Activated CD4-positive, alpha-beta T cell treated with anti-CD3 and anti-CD28 coated beads for 36 hours (primary cell): ENCODE measurements at regions of chr14 and their contacts with region 1.

Region 1: DNA sequence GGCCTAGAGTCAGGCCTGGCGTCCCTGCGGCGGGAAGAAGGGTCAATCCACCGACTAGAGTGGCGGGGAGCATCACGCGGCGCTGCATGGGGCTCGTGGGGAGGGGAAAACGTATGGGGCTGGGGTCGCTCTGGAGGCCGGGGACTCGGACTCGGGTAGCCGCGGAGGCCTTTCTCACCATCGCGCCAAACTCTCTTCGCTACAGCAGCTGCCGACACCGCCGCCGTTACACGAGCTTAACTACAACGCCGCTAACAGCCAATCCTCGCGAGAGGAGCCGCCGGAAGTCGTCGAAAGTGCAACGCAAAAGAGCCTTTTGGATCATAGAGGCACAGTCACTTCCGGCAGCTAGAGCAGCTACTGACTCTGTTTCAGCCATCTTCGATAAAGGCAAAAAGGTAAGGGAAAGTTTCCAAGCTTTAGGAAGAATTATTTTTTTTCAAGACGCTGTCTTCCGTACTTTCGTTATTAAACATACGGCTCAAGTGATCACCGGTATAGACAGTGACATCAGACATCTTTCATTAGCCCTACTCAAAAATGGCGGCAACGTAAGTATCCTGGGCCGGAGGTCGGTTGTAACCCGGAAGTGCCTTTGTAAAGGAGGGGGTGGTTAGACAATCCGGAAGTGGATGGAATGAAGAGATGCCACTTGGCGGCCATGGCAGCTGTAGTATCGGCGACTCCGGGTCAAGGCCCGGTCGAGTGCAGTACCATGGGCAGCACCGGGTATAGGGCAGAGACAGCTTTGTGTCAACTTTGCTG is at the starts of genes ERH and SLC39A9:
- DNase-seq: peak; percentile 97
- ATAC-seq: peak; percentile 89
- H3K4me3 Mint-ChIP-seq: peak within 1 kb of the TSS; percentile 95
- H3K27ac Mint-ChIP-seq: peak within 1 kb of the TSS; percentile 100
- H3K4me1 Mint-ChIP-seq: peaks cover 63% of the 10 kb centered on the region
- H3K27me3 Mint-ChIP-seq: no peaks in the 10 kb centered on the region
- total RNA-seq, gene ERH: 343 to 385 TPM
- total RNA-seq, gene SLC39A9: 40.1 to 42.6 TPM

Region 2: DNA sequence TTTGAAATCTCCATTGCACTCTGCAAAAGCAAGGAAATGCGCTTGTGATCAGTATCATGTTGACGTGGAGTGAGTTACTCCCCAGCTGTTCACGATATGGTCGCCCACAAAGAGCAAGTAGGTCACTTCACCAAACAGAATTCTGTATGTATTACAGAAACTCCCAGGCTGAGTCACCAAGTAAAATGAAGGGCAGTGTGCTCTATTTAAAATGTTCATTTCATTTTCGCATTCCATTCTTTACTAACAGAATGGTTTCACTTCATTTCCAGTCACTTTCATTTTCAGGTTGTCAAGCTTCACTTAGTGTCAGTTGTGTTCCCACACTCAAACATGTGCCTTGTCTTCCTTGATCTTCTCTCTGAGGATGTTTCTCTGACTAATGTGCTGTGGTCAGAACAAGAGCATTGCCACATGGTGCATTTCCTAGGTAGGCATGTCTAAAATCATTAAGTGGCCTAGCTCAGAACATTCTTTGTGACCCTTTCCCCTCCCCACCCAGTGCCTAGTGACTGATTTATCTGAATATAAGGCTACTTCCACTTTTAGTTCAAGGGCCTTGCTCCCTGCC is 1187.4 kb before region 1 on chr14:
- CTCF ChIA-PET with region 1: no interaction called
- POLR2A ChIA-PET with region 1: no interaction called
- intact Hi-C with region 1: loop called in 1 of 2 experiments (anchors 2 kb)
- DNase-seq: peak; percentile 71
- ATAC-seq: peak; percentile 93
- H3K4me3 Mint-ChIP-seq: peak overlapping the region; percentile 43
- H3K27ac Mint-ChIP-seq: peak overlapping the region; percentile 84
- H3K4me1 Mint-ChIP-seq: peaks cover 53% of the 10 kb centered on the region
- H3K27me3 Mint-ChIP-seq: no peaks in the 10 kb centered on the region

Region 3: DNA sequence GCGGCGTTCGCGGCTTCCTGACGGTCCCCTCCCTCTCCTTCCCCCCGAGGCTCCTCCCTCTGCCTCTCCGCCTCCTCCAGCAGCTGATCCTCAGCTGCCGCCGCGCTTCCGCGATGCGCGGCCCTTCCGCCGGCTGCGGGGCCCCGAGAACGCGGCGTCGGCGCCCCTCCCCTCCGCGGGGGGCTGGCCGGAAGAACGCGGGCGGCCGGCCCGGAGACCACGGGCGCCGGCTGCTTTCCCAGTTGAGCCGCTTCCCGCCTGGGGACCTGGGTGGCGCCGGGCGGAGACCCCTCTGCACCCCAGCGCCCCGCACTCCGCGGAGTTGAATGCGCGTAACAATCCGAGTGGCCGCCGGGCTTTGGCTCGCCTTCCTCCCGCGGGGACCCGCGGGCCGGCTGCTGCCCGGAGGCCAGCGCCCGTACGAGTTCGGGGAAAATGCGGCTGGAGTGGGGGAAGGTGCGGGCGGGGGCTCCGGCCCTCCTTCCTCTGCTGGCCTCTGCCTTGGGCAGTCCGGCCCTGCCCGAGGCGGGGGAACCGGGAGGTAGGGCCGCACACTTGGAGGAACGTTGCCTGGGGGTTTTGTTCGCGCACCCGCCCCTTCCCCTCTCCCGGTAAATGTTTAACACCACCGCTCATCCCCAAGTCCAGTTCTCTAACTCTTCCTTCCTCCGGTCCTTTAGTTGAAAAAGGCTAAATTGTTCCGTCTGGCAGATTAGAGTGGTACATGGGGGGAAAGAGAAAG is 244.9 kb before region 1 on chr14:
- CTCF ChIA-PET with region 1: interaction called, 3 read pairs
- POLR2A ChIA-PET with region 1: interaction called, 10 read pairs
- intact Hi-C with region 1: loop called (anchors 1 to 5 kb)
- DNase-seq: peak; percentile 96
- ATAC-seq: peak; percentile 93
- H3K4me3 Mint-ChIP-seq: peak overlapping the region; percentile 83
- H3K27ac Mint-ChIP-seq: peak overlapping the region; percentile 81
- H3K4me1 Mint-ChIP-seq: peaks cover 30% of the 10 kb centered on the region
- H3K27me3 Mint-ChIP-seq: no peaks in the 10 kb centered on the region

Region 4: DNA sequence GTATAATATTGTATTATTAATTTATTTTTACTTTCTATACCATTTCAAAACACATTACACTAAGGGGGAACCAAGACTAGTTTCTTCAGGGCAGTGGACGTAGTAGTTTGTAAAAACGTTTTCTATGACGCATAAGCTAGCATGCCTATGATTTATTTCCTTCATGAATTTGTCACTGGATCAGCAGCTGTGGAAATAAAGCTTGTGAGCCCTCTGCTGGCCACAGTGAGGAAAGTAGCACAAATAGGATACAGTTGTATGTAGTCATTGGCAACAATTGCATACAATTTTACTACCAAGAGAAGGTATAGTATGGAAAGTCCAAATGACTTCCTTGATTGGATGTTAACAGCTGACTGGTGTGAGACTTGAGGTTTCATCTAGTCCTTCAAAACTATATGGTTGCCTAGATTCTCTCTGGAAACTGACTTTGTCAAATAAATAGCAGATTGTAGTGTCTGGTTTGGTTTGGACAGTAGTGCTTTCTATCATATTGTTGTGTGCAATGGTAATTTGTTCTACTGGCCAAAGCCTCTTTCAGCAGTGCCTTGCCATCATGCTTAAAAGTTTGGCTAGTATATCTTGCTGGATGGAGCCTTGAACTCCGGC is 62.0 kb after region 1 on chr14:
- CTCF ChIA-PET with region 1: interaction called, 7 read pairs
- POLR2A ChIA-PET with region 1: no interaction called
- intact Hi-C with region 1: loop called in 1 of 2 experiments (anchors 2 kb)
- DNase-seq: peak; percentile 79
- ATAC-seq: peak; percentile 93
- H3K4me3 Mint-ChIP-seq: no peak overlapping the region
- H3K27ac Mint-ChIP-seq: no peak overlapping the region
- H3K4me1 Mint-ChIP-seq: no peaks in the 10 kb centered on the region
- H3K27me3 Mint-ChIP-seq: no peaks in the 10 kb centered on the region

Region 5: GRCh38 chr14:69766984-69767368 is 368.7 kb after region 1 on chr14 and contains the start of gene SRSF5:
- CTCF ChIA-PET with region 1: no interaction called
- POLR2A ChIA-PET with region 1: interaction called, 8 read pairs
- intact Hi-C with region 1: loop called (anchors 1 to 10 kb)
- DNase-seq: peak; percentile 96
- ATAC-seq: peak; percentile 76
- H3K4me3 Mint-ChIP-seq: peak within 1 kb of the TSS; percentile 96
- H3K27ac Mint-ChIP-seq: peak within 1 kb of the TSS; percentile 99
- H3K4me1 Mint-ChIP-seq: peaks cover 77% of the 10 kb centered on the region
- H3K27me3 Mint-ChIP-seq: no peaks in the 10 kb centered on the region
- total RNA-seq, gene SRSF5: 265 to 319 TPM

Region 6: GRCh38 chr14:70809543-70810244 is 1411.5 kb after region 1 on chr14:
- CTCF ChIA-PET with region 1: no interaction called
- POLR2A ChIA-PET with region 1: no interaction called
- intact Hi-C with region 1: loop called in 1 of 2 experiments (anchors 5 kb)
- DNase-seq: peak; percentile 96
- ATAC-seq: peak; percentile 87
- H3K4me3 Mint-ChIP-seq: no peak overlapping the region
- H3K27ac Mint-ChIP-seq: peak overlapping the region; percentile 20
- H3K4me1 Mint-ChIP-seq: peaks cover 4% of the 10 kb centered on the region
- H3K27me3 Mint-ChIP-seq: no peaks in the 10 kb centered on the region